ENCODE measurements at regions of chr2 and their contacts with region 1.

Region 1: DNA sequence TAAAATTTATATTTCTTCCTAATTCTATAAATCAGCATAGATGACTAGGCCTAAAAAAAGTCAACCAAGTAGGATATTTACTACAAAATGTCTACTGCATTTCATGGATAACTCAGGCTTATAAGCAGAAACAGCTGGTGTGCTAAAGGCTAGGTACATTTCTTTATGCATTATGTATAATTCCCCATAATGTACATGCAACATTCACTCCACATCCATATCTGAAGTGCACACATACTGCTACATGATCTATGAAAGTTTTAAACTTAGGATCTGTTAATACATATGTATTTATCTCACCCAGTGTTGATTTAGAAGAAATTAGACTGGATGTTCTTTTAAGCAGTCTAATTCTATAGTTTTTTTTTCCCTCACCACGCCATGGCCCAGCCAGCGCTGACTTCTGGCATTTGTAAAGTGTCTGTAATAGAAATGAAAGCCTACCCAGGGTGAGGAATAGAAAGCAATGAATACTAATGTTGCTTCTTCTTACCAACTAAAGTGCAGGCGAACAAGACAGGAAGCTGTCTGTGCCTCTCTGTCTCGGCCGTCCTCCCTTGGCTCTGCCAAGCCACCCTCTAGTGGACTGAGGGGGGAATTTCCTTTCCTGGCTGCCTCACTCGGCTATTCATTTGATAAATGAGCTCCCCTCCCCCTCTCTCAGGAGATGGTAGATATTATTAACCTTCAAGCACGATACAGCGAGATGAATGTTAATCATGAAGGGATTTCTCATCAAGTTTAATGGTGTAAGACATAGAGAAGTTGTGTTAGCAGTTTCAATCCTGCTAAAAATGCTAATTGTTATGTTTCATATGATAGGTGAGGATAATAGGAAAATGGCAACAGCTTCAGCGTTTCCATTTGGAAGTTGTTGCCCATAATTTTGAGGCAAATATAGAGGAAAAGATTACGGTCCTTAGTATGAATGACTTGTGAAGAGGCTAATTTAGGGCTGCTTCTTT is 384.5 kb downstream of the MTX2 start:
- DNase-seq: no peak
- CTCF ChIP-seq: peak; percentile 35

Region 2: GRCh38 chr2:176140513-176141317 is 513.0 kb before region 1 on chr2:
- CTCF ChIA-PET with region 1: interaction called, 39 read pairs
- POLR2A ChIA-PET with region 1: no interaction called
- DNase-seq: peak; percentile 92
- CTCF ChIP-seq: peak; percentile 95

Region 3: GRCh38 chr2:176454893-176455811 is 198.6 kb before region 1 on chr2:
- CTCF ChIA-PET with region 1: interaction called, 19 read pairs
- POLR2A ChIA-PET with region 1: no interaction called
- DNase-seq: peak; percentile 55
- CTCF ChIP-seq: peak; percentile 84

Region 4: DNA sequence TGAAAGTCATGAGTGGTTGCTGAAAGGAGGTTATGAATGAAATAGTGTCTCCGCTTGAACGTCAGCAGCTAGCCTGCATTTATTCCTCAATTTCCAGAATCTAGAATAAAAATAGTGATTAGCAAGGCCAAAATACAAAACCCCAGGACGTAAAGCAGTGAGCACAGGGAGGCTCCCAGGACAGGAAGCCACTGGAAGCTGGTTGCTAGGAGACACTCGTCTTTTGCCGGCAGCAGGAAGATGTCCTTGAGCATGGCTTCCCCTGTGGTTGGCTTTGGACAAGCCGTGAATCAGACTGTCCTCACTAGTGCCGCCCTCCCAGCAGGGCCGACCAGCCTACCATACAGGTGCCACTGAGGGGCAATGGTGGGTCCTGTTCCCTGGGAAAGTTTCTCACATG is 10.1 kb before region 1 on chr2:
- CTCF ChIA-PET with region 1: interaction called, 70 read pairs
- POLR2A ChIA-PET with region 1: no interaction called
- DNase-seq: no peak
- CTCF ChIP-seq: no peak

Region 5: GRCh38 chr2:176669398-176670174 is 15.8 kb after region 1 on chr2:
- CTCF ChIA-PET with region 1: interaction called, 48 read pairs
- POLR2A ChIA-PET with region 1: no interaction called
- DNase-seq: peak; percentile 5
- CTCF ChIP-seq: no peak

Region 6: GRCh38 chr2:176733698-176734430 is 80.1 kb after region 1 on chr2:
- CTCF ChIA-PET with region 1: no interaction called
- POLR2A ChIA-PET with region 1: no interaction called
- DNase-seq: no peak
- CTCF ChIP-seq: no peak

Region 7: GRCh38 chr2:176814306-176815052 is 160.7 kb after region 1 on chr2:
- CTCF ChIA-PET with region 1: interaction called, 12 read pairs
- POLR2A ChIA-PET with region 1: no interaction called
- DNase-seq: peak; percentile 49
- CTCF ChIP-seq: peak; percentile 42